Lower leg skin (tissue), 4 donors: ENCODE measurements at regions of chr3 and their contacts with region 1.

Region 1: GRCh38 chr3:55877703-55878102 is 390.6 kb upstream of the WNT5A start:
- DNase-seq: no peak
- H3K4me3 ChIP-seq: no peak overlapping the region
- CTCF ChIP-seq: no peak
- POLR2A ChIP-seq: no peak

Region 2: DNA sequence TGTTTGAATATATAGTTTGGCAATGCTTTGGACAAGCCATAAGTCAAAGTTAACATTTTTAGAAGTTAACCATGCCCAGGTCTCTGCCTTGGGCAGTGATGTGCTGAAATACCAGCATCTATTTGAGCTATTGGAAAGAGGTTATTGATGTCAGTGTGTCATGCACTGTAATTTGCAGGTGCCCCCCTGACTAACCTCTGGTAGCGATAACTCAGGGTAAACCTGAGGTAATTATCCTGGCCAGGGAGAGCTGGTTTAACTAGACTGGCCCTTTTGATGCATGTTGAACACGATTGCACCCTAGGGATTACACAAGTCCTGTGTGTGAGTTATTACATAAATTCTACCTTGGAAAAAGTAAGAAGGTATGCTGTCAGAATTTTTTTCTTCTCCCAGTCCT is 65.2 kb after region 1 on chr3:
- intact Hi-C with region 1: loop called (anchors 2 kb)
- DNase-seq: no peak
- H3K4me3 ChIP-seq: no peak overlapping the region
- CTCF ChIP-seq: no peak
- POLR2A ChIP-seq: no peak